ENCODE measurements at regions of chr20 and their contacts with region 1.

Region 1: GRCh38 chr20:9978397-9979004 is 56.3 kb upstream of the ANKEF1 start:
- DNase-seq: peak; percentile 24 to 36
- H3K4me3 ChIP-seq: no peak overlapping the region
- H3K27ac ChIP-seq: no peak overlapping the region
- H3K4me1 ChIP-seq: no peaks in the 10 kb centered on the region
- H3K27me3 ChIP-seq: no peaks in the 10 kb centered on the region
- CTCF ChIP-seq: peak; percentile 37 to 97 (median 80)
- POLR2A ChIP-seq: no peak

Region 2: GRCh38 chr20:8909596-8909995 is 1068.9 kb before region 1 on chr20:
- intact Hi-C with region 1: no loop called
- DNase-seq: no peak
- H3K4me3 ChIP-seq: no peak overlapping the region
- H3K27ac ChIP-seq: no peak overlapping the region
- H3K4me1 ChIP-seq: no peaks in the 10 kb centered on the region
- H3K27me3 ChIP-seq: no peaks in the 10 kb centered on the region
- CTCF ChIP-seq: no peak
- POLR2A ChIP-seq: no peak

Region 3: GRCh38 chr20:10090588-10091166 is 112.2 kb after region 1 on chr20:
- intact Hi-C with region 1: loop called (anchors 2 kb)
- DNase-seq: peak; percentile 51 to 61
- H3K4me3 ChIP-seq: no peak overlapping the region
- H3K27ac ChIP-seq: no peak overlapping the region
- H3K4me1 ChIP-seq: no peaks in the 10 kb centered on the region
- H3K27me3 ChIP-seq: no peaks in the 10 kb centered on the region
- CTCF ChIP-seq: peak; percentile 25 to 82 (median 66)
- POLR2A ChIP-seq: no peak